Endothelial cell of umbilical vein (primary cell): ENCODE measurements at regions of chr1 and their contacts with region 1.

Region 1: DNA sequence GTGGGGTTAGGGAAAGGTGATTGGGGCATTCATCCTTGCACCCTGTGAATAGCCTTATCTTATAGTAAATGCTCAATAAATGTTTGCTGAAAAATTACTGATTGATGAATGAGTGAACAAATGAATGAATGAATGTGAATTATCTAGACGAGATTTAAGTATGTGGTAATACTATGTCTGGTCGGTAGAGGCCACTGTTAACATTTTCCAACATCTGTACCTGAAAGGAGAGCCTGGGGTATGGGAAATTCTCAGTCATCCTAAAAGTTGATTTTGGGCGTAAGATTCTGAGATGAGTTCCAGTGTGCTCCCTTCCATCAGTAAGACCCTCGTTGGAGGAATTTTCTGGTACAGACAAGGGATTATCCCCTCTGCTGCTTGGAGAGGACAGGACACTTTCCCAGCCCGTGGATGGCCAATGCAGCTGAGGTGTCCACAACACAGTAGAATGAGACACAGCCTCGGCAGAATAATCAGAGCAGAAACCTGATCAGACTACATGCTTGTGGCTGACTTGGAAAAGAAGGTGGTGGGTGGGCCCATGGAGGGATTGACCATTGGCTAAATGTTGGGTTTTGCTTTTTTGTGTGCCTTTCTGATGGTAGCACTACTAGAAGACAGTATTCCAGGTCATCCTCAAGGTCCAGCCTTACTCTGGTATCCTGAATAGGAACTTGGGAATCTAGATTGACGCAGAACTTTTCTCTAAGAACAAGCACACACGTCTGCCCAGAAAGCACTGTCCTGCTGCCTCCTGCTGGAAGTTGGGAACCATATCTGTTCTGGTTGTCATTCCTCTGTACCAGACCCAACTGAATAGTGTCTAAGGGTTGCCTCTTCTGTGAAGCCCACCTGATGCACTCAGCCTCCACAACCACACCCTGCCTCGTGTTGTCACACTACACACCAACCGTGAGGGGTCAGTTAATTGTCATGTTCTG is 262.0 kb downstream of the TNR start:
- DNase-seq: peak; percentile 59
- H3K4me3 ChIP-seq: no peak overlapping the region
- H3K27ac ChIP-seq: no peak overlapping the region
- H3K4me1 ChIP-seq: peaks cover 14% of the 10 kb centered on the region
- H3K27me3 ChIP-seq: peaks cover 15 to 16% of the 10 kb centered on the region in 2 experiments
- CTCF ChIP-seq: peak; percentile 44 to 47
- POLR2A ChIP-seq: no peak

Region 2: GRCh38 chr1:175307160-175307559 is 174.2 kb before region 1 on chr1:
- CTCF ChIA-PET with region 1: no interaction called
- POLR2A ChIA-PET with region 1: no interaction called
- dilution Hi-C with region 1: no loop called
- intact Hi-C with region 1: no loop called
- DNase-seq: no peak
- H3K4me3 ChIP-seq: no peak overlapping the region
- H3K27ac ChIP-seq: no peak overlapping the region
- H3K4me1 ChIP-seq: peaks cover 6% of the 10 kb centered on the region
- H3K27me3 ChIP-seq: peaks cover 2 to 12% of the 10 kb centered on the region in 2 experiments
- CTCF ChIP-seq: no peak
- POLR2A ChIP-seq: no peak

Region 3: GRCh38 chr1:175434283-175434860 is 47.0 kb before region 1 on chr1:
- CTCF ChIA-PET with region 1: no interaction called
- POLR2A ChIA-PET with region 1: no interaction called
- dilution Hi-C with region 1: no loop called
- intact Hi-C with region 1: no loop called
- DNase-seq: no peak
- H3K4me3 ChIP-seq: no peak overlapping the region
- H3K27ac ChIP-seq: no peak overlapping the region
- H3K4me1 ChIP-seq: no peaks in the 10 kb centered on the region
- H3K27me3 ChIP-seq: no peaks in the 10 kb centered on the region
- CTCF ChIP-seq: peak; percentile 21 to 37
- POLR2A ChIP-seq: no peak

Region 4: GRCh38 chr1:175514387-175514953 is 33.1 kb after region 1 on chr1:
- CTCF ChIA-PET with region 1: interaction called, 7 read pairs
- POLR2A ChIA-PET with region 1: no interaction called
- dilution Hi-C with region 1: no loop called
- intact Hi-C with region 1: loop called (anchors 1 kb)
- DNase-seq: peak; percentile 94
- H3K4me3 ChIP-seq: peak overlapping the region in 1 of 3 experiments; percentile 25
- H3K27ac ChIP-seq: peak overlapping the region; percentile 99
- H3K4me1 ChIP-seq: peaks cover 61% of the 10 kb centered on the region
- H3K27me3 ChIP-seq: no peaks in the 10 kb centered on the region
- CTCF ChIP-seq: no peak
- POLR2A ChIP-seq: peak; percentile 22

Region 5: DNA sequence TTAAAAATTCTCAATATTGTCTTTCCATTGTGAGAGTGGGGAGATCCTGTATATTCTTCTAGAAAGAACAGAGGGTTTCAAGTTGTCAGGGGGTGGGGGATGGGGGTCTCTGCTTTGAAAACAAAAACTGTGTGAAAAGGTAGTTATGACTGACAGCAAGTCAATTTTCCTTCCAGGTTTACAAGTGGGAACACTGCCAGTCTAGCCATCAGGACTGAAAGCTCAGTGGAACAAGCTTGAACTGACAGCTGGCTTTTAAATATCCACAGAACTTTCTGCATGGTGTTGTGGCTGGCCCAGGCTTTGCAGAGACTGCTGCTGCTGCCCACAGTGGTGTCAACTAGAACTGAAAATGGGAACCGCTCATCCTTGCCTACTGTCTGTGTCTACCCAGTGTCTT is 99.4 kb after region 1 on chr1:
- CTCF ChIA-PET with region 1: no interaction called
- POLR2A ChIA-PET with region 1: no interaction called
- dilution Hi-C with region 1: no loop called
- intact Hi-C with region 1: no loop called
- DNase-seq: no peak
- H3K4me3 ChIP-seq: no peak overlapping the region
- H3K27ac ChIP-seq: no peak overlapping the region
- H3K4me1 ChIP-seq: no peaks in the 10 kb centered on the region
- H3K27me3 ChIP-seq: peaks cover 2 to 4% of the 10 kb centered on the region in 2 experiments
- CTCF ChIP-seq: no peak
- POLR2A ChIP-seq: no peak

Region 6: GRCh38 chr1:175612286-175612685 is 130.9 kb after region 1 on chr1:
- CTCF ChIA-PET with region 1: interaction called, 3 read pairs
- POLR2A ChIA-PET with region 1: no interaction called
- dilution Hi-C with region 1: no loop called
- intact Hi-C with region 1: loop called (anchors 5 kb)
- DNase-seq: no peak
- H3K4me3 ChIP-seq: no peak overlapping the region
- H3K27ac ChIP-seq: no peak overlapping the region
- H3K4me1 ChIP-seq: peaks cover 12% of the 10 kb centered on the region
- H3K27me3 ChIP-seq: peaks cover 0 to 1% of the 10 kb centered on the region in 2 experiments
- CTCF ChIP-seq: no peak
- POLR2A ChIP-seq: no peak

Region 7: DNA sequence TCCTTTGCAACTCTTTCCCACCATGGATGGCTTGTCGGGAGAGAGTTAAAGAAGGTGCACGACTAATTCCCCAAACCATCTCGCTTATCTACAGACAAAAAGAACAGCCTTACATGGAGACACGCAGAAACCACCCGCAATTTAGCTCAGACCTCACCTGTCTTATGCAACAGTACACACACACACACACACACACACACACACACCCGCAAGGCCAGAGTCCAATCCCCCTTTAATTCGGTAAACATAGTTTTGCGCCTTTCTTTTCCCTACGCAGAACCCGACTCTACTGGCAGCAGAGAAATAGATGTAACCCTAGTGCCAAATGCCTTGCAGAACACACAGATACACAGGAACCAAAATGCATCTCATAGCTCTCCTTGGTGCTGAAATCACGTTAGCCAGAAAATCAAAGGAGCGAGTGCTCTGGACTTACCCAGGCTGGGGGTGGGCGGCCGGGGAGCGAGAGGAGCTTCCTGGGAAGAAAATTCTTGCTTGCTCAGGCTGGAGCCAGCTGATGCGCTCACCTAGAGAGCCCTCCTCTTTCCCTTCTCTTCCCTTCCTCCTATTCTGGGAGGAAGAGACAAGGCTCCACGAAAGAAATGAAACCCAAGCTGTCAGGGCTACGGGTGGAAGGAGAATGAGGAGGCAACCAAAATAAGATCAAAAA is 261.5 kb after region 1 on chr1:
- CTCF ChIA-PET with region 1: interaction called, 41 read pairs
- POLR2A ChIA-PET with region 1: no interaction called
- dilution Hi-C with region 1: no loop called
- intact Hi-C with region 1: loop called (anchors 1 kb)
- DNase-seq: peak; percentile 55
- H3K4me3 ChIP-seq: no peak overlapping the region
- H3K27ac ChIP-seq: no peak overlapping the region
- H3K4me1 ChIP-seq: no peaks in the 10 kb centered on the region
- H3K27me3 ChIP-seq: peaks cover 2 to 5% of the 10 kb centered on the region in 2 experiments
- CTCF ChIP-seq: no peak
- POLR2A ChIP-seq: no peak

Region 8: GRCh38 chr1:175887981-175888433 is 406.6 kb after region 1 on chr1:
- CTCF ChIA-PET with region 1: interaction called, 10 read pairs
- POLR2A ChIA-PET with region 1: no interaction called
- dilution Hi-C with region 1: no loop called
- intact Hi-C with region 1: loop called (anchors 1 kb)
- DNase-seq: peak; percentile 44
- H3K4me3 ChIP-seq: no peak overlapping the region
- H3K27ac ChIP-seq: no peak overlapping the region
- H3K4me1 ChIP-seq: no peaks in the 10 kb centered on the region
- H3K27me3 ChIP-seq: peaks cover 0 to 2% of the 10 kb centered on the region in 2 experiments
- CTCF ChIP-seq: peak; percentile 81 to 96
- POLR2A ChIP-seq: no peak